Posterior vena cava (tissue), 2 donors: ENCODE measurements at regions of chr16 and their contacts with region 1.

Region 1: GRCh38 chr16:63938661-63939060 is 1183.2 kb downstream of the CDH11 start:
- DNase-seq: no peak

Region 2: GRCh38 chr16:63596716-63597115 is 341.9 kb before region 1 on chr16:
- intact Hi-C with region 1: loop called in 1 of 2 experiments (anchors 5 kb)
- DNase-seq: no peak

Region 3: GRCh38 chr16:63876103-63876502 is 62.6 kb before region 1 on chr16:
- intact Hi-C with region 1: no loop called
- DNase-seq: no peak

Region 4: DNA sequence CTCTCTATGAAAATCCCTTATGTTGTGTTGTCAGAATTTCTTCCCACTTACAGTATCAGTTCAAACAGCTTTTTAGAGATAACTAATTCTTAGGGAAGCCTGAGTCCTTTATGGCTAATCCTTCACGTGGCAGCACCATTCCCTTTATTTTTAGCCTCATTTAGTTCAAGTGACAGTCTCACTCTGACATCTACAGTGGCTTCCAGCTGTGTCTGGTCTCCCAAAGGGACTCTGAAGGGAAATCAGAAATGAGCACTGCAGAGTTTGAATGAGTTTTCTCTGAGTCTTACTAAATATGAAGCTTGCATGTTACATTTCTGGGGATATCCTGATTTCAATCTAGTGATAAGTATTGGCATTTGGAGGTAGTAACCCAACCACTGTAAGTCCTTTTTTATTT is 79.1 kb after region 1 on chr16:
- intact Hi-C with region 1: no loop called
- DNase-seq: no peak